K562 (cell line): ENCODE measurements at regions of chr17 and their contacts with region 1.

Region 1: GRCh38 chr17:27293898-27294688 is at the start of gene WSB1:
- DNase-seq: peak; percentile 94 to 98 (median 98)
- ATAC-seq: peak; percentile 88
- H3K4me3 ChIP-seq: peak within 1 kb of the TSS; percentile 93
- H3K27ac ChIP-seq: peak within 1 kb of the TSS; percentile 92
- H3K4me1 ChIP-seq: peaks cover 17 to 25% of the 10 kb centered on the region in 2 experiments
- H3K27me3 ChIP-seq: no peaks in the 10 kb centered on the region
- CTCF ChIP-seq: 0 out of 6 replicates have a peak, but pooled peaks of 1 of the 3 experiments have one; percentile 0
- EP300 ChIP-seq: 0 out of 2 replicates have a peak, but pooled peaks have one; percentile 49
- POLR2A ChIP-seq: peak; percentile 99
- RAD21 ChIP-seq: no peak; a peak in 1 of 4 replicates
- polyA plus RNA-seq, gene WSB1: 22.8 to 29.8 TPM

Region 2: GRCh38 chr17:27091043-27091497 is 203.0 kb before region 1 on chr17:
- CTCF ChIA-PET with region 1: no interaction called
- POLR2A ChIA-PET with region 1: interaction called, 32 read pairs
- in situ Hi-C with region 1: no loop called
- intact Hi-C with region 1: loop called (anchors 10 kb)
- DNase-seq: peak in 1 of 4 experiments; percentile 60
- ATAC-seq: 0 out of 3 replicates have a peak, but pooled peaks have one; percentile 4
- H3K4me3 ChIP-seq: peak overlapping the region; percentile 80
- H3K27ac ChIP-seq: peak overlapping the region; percentile 88
- H3K4me1 ChIP-seq: peaks cover 3 to 4% of the 10 kb centered on the region in 2 experiments; a peak in 2 of 5 replicates
- H3K27me3 ChIP-seq: no peaks in the 10 kb centered on the region
- CTCF ChIP-seq: no peak
- EP300 ChIP-seq: no peak
- POLR2A ChIP-seq: 0 out of 2 replicates have a peak, but pooled peaks have one; percentile 20
- RAD21 ChIP-seq: no peak

Region 3: DNA sequence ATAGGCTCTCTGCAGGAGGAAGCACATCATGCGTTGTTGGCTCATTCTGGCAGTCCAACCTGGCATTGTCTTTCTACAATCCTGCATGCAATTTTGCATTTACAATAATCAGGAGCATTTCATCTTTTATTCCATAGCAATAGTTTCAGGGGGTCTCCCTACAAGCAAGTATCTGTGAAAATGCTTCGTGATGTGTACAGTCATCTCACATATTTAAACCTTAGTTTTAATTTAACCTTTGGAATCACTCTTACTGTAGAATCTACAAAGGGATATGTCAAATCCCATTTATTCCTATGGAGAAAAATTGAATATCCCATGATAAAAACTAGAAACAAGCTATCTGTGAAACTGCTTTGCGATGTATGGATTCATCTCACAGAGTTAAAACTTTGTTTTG is 112.2 kb before region 1 on chr17:
- CTCF ChIA-PET with region 1: no interaction called
- POLR2A ChIA-PET with region 1: no interaction called
- in situ Hi-C with region 1: no loop called
- intact Hi-C with region 1: no loop called
- DNase-seq: no peak
- ATAC-seq: no peak
- H3K4me3 ChIP-seq: no peak overlapping the region
- H3K27ac ChIP-seq: no peak overlapping the region
- H3K4me1 ChIP-seq: no peaks in the 10 kb centered on the region
- H3K27me3 ChIP-seq: no peaks in the 10 kb centered on the region
- CTCF ChIP-seq: no peak
- EP300 ChIP-seq: no peak
- POLR2A ChIP-seq: no peak
- RAD21 ChIP-seq: no peak

Region 4: GRCh38 chr17:27276653-27277156 is 17.4 kb before region 1 on chr17:
- CTCF ChIA-PET with region 1: no interaction called
- POLR2A ChIA-PET with region 1: interaction called, 17 read pairs
- in situ Hi-C with region 1: no loop called
- intact Hi-C with region 1: no loop called
- DNase-seq: peak in 2 of 4 experiments; percentile 23 to 41
- ATAC-seq: peak; percentile 92
- H3K4me3 ChIP-seq: no peak overlapping the region
- H3K27ac ChIP-seq: no peak overlapping the region
- H3K4me1 ChIP-seq: peaks cover 0 to 3% of the 10 kb centered on the region in 2 experiments; a peak in 1 of 5 replicates
- H3K27me3 ChIP-seq: no peaks in the 10 kb centered on the region
- CTCF ChIP-seq: no peak
- EP300 ChIP-seq: no peak
- POLR2A ChIP-seq: no peak
- RAD21 ChIP-seq: no peak

Region 5: GRCh38 chr17:27306276-27306835 is 12.3 kb after region 1 on chr17:
- CTCF ChIA-PET with region 1: no interaction called
- POLR2A ChIA-PET with region 1: interaction called, 48 read pairs
- in situ Hi-C with region 1: no loop called
- intact Hi-C with region 1: no loop called
- DNase-seq: no peak
- ATAC-seq: no peak
- H3K4me3 ChIP-seq: no peak overlapping the region
- H3K27ac ChIP-seq: no peak overlapping the region
- H3K4me1 ChIP-seq: no peaks in the 10 kb centered on the region
- H3K27me3 ChIP-seq: no peaks in the 10 kb centered on the region
- CTCF ChIP-seq: no peak
- EP300 ChIP-seq: no peak
- POLR2A ChIP-seq: no peak
- RAD21 ChIP-seq: no peak

Region 6: DNA sequence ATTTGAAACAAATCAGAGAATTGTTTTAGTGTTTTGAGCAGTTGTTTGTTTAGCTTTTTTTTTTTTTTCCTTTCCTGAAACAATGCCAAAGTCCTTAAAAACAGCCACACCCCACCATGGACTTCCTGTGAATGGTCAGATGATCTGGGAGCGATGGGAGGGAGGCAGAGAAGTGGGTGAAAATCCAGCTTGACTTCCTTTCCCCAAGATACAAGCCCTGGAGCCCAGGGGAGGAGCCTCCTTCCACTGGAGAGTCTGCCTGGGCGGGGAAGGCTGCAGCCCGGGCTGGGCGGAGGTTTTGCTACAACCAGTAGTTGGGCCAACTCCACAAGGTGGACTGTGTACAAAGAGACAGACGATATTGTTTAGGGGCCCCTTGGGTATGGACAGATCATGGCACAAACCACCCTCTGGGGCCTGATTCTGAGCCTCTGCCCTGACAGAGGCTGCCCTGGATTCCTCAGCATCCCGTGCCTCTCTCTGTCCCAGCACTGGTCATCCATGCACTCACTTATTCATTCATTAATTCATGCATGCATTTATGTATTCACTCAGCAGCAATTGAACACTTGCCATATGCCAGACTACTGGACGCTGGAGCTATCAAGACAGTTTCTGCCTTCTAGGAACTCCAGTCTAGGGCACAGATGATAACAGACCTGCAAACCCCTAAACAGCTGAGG is 29.6 kb after region 1 on chr17:
- CTCF ChIA-PET with region 1: no interaction called
- POLR2A ChIA-PET with region 1: interaction called, 37 read pairs
- in situ Hi-C with region 1: no loop called
- intact Hi-C with region 1: no loop called
- DNase-seq: peak; percentile 46 to 77 (median 56)
- ATAC-seq: peak; percentile 94
- H3K4me3 ChIP-seq: no peak overlapping the region
- H3K27ac ChIP-seq: no peak overlapping the region
- H3K4me1 ChIP-seq: peaks cover 7 to 13% of the 10 kb centered on the region in 2 experiments; a peak in 4 of 5 replicates
- H3K27me3 ChIP-seq: no peaks in the 10 kb centered on the region
- CTCF ChIP-seq: no peak
- EP300 ChIP-seq: 0 out of 2 replicates have a peak, but pooled peaks have one; percentile 5
- POLR2A ChIP-seq: no peak
- RAD21 ChIP-seq: no peak

Region 7: DNA sequence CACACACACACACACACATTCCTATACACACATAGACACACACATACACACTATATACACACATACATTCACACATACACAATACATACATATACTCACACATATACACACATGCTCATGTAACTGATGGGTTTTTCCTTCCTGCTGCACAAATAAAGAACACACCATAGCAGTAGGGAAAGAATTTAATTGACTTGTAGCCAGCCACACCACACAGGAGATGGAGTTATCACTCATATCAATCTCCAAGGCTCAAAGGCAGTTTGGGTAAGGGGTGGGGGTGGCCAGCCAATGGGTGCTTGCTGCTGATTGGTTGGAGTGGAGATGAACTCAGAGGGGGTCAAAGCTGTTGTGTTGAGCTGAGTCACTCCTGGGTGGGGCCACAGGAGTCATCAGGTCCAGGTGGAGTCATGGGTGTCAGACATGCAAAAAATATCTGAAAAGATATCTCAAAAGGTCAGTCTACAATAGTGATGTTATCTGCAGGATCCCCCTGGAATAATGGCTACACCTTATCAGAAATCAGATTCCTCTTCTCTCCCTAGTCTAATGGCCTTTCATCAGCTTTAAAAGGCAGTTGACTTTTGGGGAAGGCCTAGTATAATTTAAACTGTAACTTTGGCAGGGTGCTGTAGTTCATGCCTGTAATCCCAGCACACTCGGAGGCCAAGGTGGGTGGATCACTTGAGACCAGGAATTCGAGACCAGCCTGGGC is 45.9 kb after region 1 on chr17:
- CTCF ChIA-PET with region 1: no interaction called
- POLR2A ChIA-PET with region 1: interaction called, 13 read pairs
- in situ Hi-C with region 1: no loop called
- intact Hi-C with region 1: no loop called
- DNase-seq: peak; percentile 87 to 95 (median 90)
- ATAC-seq: peak; percentile 92
- H3K4me3 ChIP-seq: no peak overlapping the region
- H3K27ac ChIP-seq: peak overlapping the region; percentile 83
- H3K4me1 ChIP-seq: peaks cover 36 to 68% of the 10 kb centered on the region in 2 experiments
- H3K27me3 ChIP-seq: no peaks in the 10 kb centered on the region
- CTCF ChIP-seq: no peak
- EP300 ChIP-seq: peak; percentile 78
- POLR2A ChIP-seq: peak; percentile 57; the same call in 1 of the 2 replicates
- RAD21 ChIP-seq: no peak

Region 8: DNA sequence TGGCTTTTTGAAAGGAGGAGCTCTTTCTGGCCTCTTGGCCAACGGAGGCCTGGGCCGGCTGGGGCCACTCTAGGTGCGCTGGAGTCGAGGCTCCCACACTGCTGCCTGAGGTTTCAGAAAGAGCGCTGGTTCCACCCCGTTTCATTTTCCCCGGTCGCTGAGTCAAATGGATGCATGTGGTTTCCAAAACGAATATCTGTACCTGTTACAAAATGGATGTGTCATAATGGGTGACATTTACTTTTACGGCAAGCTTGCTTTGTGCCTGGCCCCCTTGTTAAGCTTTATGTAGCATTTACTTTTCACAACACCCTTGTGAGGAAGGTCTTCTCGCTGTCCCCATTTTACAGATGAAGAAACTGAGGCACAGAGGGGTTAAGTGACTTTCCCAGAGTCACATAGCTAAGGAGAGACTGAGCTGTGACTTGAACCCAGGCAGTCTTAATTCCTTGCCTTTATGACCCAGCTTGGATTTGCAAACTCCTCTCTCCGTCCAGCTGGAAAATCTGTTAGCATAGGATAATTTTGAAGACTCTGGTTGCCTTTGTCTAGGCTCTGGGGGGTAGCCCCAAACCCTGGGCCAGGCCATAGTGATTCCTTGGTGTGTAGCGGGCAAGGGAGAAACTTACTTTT is 172.8 kb after region 1 on chr17:
- CTCF ChIA-PET with region 1: no interaction called
- POLR2A ChIA-PET with region 1: no interaction called
- in situ Hi-C with region 1: no loop called
- intact Hi-C with region 1: loop called (anchors 5 kb)
- DNase-seq: peak in 2 of 4 experiments; percentile 36 to 60
- ATAC-seq: peak; percentile 60
- H3K4me3 ChIP-seq: no peak overlapping the region
- H3K27ac ChIP-seq: peak overlapping the region; percentile 66
- H3K4me1 ChIP-seq: peaks cover 54 to 71% of the 10 kb centered on the region in 2 experiments
- H3K27me3 ChIP-seq: no peaks in the 10 kb centered on the region
- CTCF ChIP-seq: no peak
- EP300 ChIP-seq: no peak
- POLR2A ChIP-seq: no peak
- RAD21 ChIP-seq: no peak